ENCODE measurements at regions of chr1 and their contacts with region 1.

Region 1: GRCh38 chr1:210400043-210400840 is 71.5 kb downstream of the HHAT start:
- DNase-seq: peak; percentile 31
- ATAC-seq: peak; percentile 91
- H3K4me3 Mint-ChIP-seq: peak overlapping the region; percentile 5
- H3K27ac Mint-ChIP-seq: peak overlapping the region; percentile 9
- H3K4me1 Mint-ChIP-seq: peaks cover 9% of the 10 kb centered on the region
- H3K27me3 Mint-ChIP-seq: no peaks in the 10 kb centered on the region
- CTCF ChIP-seq: no peak

Region 2: DNA sequence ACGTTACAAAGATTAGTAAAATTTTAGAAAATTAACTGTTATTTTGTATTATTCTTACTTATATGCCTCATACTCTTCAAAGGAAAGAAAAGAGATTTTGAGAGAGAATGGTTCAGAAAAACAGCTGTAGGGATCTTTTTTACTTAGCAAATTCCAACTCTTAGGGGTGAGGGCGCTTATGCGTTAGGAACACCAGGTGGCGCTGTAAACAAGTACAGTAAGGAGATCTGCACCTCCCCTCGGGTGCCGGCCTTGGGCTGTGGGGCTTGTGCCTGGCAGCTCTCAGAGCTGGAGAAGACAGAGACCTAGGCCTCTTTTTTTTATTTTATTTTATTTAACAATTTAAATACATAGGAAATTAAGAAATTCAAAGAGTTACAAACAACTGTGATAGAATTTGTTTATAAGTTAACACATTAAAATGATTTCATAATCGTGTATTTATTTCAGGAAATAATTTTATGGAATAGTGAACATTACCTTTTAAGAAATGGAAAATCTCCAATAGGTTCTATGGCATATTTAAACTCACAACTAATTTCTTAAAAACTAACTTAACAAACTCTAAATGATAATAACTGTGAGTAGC is 539.9 kb before region 1 on chr1:
- CTCF ChIA-PET with region 1: interaction called, 9 read pairs
- POLR2A ChIA-PET with region 1: no interaction called
- intact Hi-C with region 1: loop called (anchors 1 kb)
- DNase-seq: peak; percentile 26
- ATAC-seq: peak; percentile 86
- H3K4me3 Mint-ChIP-seq: no peak overlapping the region
- H3K27ac Mint-ChIP-seq: no peak overlapping the region
- H3K4me1 Mint-ChIP-seq: no peaks in the 10 kb centered on the region
- H3K27me3 Mint-ChIP-seq: peaks cover 5% of the 10 kb centered on the region
- CTCF ChIP-seq: peak; percentile 93

Region 3: GRCh38 chr1:210143465-210144062 is 256.7 kb before region 1 on chr1:
- CTCF ChIA-PET with region 1: interaction called, 28 read pairs
- POLR2A ChIA-PET with region 1: no interaction called
- intact Hi-C with region 1: loop called (anchors 1 kb)
- DNase-seq: peak; percentile 16
- ATAC-seq: no peak
- H3K4me3 Mint-ChIP-seq: no peak overlapping the region
- H3K27ac Mint-ChIP-seq: no peak overlapping the region
- H3K4me1 Mint-ChIP-seq: no peaks in the 10 kb centered on the region
- H3K27me3 Mint-ChIP-seq: peaks cover 18% of the 10 kb centered on the region
- CTCF ChIP-seq: no peak

Region 4: DNA sequence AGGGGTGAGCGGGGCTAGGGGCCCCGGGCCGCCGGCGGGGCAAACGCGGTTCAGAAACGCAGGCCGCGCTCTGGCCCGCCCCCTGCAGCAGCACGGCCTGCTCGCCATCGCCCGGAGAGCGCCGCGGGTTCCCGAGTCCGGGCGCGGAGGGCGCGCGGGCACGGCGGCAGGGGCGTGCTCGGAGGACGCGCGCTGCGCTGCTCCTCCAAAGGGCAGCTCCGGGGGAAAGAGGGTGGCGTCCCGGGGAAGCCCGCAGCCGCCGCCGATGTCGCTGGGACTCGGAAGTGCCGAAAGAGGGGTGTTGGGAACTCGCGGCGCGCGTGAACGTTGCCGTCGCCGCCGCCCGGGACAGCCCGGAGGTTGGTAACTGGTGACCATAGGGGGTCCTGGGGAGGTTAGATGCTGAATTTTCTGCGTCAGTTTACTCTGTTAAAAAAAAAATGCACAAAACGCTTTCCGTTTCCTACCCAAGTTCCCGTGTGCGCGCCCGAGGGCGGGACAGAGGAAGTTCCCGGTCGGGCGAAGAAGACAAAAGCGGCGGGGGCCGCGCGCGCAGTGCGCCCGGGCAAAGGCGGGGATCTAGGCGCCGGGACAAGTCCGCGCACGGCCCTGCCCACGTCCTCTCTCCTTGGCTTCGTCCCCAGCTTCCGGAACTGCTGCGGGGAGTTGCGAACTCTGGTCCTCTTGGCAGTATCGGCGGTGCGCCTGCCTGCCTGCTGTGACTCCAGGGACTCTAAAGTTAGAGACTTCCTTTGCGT is 71.3 kb before region 1 on chr1 and contains the start of gene HHAT:
- CTCF ChIA-PET with region 1: interaction called, 3 read pairs
- POLR2A ChIA-PET with region 1: interaction called, 4 read pairs
- intact Hi-C with region 1: loop called (anchors 1 kb)
- DNase-seq: peak; percentile 73
- ATAC-seq: peak; percentile 80
- H3K4me3 Mint-ChIP-seq: peak within 1 kb of the TSS; percentile 97
- H3K27ac Mint-ChIP-seq: peak within 1 kb of the TSS; percentile 96
- H3K4me1 Mint-ChIP-seq: peaks cover 43% of the 10 kb centered on the region
- H3K27me3 Mint-ChIP-seq: peaks cover 6% of the 10 kb centered on the region
- CTCF ChIP-seq: no peak
- total RNA-seq, gene HHAT: 6.1 and 8.5 TPM in 2 replicates

Region 5: DNA sequence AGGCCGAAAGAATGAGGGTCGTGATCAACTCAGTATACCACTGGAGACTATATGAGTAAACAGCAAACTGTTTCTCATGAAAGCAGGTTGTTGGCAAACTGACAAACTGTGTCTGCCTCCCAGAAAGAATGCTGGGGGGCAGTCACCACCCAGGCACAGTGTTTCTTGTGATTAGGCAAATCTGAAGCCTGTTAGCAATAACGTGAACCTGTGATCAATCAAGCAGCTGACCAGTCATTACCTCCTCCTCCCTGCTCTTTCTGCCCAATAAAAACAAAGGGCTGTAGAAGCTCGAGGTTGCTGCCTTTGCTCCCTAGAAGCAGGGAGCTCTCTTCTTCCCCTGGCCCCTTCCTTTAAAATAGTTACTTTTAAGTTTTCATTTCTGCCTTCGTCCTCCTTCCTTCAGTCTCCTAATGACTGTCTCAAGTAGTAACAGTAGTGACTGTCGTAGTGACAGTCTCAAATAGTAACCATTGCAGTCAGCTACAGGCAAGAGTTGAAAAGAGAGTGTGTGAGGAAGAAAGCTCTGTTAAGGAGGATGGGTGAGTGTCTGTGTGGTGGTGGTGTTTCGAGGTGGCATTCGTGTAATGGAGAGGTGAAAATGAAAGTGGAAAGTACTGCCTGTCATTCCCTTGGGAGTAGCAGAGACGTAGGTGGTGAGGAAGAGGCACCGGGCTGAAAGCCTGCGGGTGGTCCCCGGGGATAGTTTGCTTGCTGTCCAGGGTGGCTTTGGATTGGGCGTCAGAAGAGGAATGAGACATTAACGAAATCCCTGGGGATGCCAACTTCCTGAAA is 57.1 kb before region 1 on chr1:
- CTCF ChIA-PET with region 1: interaction called, 4 read pairs
- POLR2A ChIA-PET with region 1: interaction called, 6 read pairs
- intact Hi-C with region 1: loop called (anchors 1 kb)
- DNase-seq: peak; percentile 62
- ATAC-seq: peak; percentile 90
- H3K4me3 Mint-ChIP-seq: no peak overlapping the region
- H3K27ac Mint-ChIP-seq: no peak overlapping the region
- H3K4me1 Mint-ChIP-seq: peaks cover 34% of the 10 kb centered on the region
- H3K27me3 Mint-ChIP-seq: no peaks in the 10 kb centered on the region
- CTCF ChIP-seq: no peak

Region 6: DNA sequence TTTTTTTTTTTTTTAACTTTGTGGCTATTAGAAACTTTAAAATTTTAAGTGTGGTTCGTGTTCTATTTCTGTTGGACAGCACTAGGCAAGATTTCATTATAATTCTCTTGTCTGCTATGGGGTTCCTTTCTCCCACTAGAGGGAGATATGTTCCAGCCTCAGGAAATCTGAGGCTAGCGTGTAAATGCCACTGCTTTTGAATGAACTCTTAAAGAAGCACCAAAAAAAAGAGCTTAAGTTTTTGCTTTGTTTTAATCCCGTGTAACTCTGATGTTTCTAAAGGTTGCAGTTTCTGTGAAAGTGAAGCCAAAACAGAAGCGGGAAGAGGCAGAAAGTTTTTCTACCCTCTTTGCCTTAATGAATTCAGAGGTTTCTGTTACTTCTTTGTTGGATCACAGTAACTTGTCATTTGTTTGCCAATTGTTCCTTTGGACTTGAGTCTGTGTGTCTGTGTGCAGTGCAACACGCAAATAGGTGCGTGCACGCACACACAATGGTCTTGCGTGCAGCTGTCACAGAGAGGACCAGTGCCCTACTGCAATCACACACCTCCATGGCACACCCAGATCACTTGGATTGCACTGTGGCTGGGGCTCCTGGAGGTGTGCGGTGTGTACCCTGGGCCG is 39.3 kb before region 1 on chr1:
- CTCF ChIA-PET with region 1: interaction called, 10 read pairs
- POLR2A ChIA-PET with region 1: no interaction called
- intact Hi-C with region 1: loop called (anchors 1 kb)
- DNase-seq: no peak
- ATAC-seq: peak; percentile 62
- H3K4me3 Mint-ChIP-seq: no peak overlapping the region
- H3K27ac Mint-ChIP-seq: no peak overlapping the region
- H3K4me1 Mint-ChIP-seq: no peaks in the 10 kb centered on the region
- H3K27me3 Mint-ChIP-seq: no peaks in the 10 kb centered on the region
- CTCF ChIP-seq: no peak

Region 7: DNA sequence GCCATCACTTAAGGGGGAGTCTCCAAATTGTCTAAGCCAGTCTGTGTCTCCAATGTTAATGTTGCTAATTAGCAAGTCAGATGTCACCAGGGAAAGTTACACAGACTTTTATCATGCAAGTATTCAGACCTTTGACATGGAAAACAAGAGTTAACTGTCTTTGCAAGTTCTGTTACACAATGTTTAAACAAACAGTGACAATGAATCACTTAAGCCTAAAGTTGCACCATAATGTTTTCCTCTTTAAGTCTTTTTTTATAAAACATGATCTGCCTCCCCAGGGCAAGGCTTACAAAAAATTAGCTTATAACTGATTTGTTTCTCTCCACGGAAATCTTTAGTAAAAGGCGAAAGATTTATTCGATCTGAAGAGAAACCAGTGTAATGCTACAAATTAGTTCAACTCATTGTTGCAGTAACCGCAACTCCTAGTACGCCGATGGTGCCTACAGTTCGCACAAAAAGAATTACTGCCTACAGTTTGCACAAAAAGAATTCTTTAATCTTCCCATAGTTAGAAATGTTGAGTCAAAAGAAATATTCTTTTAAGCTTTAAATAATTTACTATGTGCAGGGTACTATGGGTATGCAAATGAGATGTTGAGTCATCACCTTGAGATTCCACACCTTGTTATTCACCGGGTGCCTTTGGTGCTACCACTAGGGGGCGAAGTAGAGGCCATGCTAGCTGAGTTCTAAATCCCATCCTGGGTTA is 26.2 kb before region 1 on chr1:
- CTCF ChIA-PET with region 1: interaction called, 8 read pairs
- POLR2A ChIA-PET with region 1: interaction called, 8 read pairs
- intact Hi-C with region 1: loop called (anchors 1 kb)
- DNase-seq: no peak
- ATAC-seq: peak; percentile 70
- H3K4me3 Mint-ChIP-seq: no peak overlapping the region
- H3K27ac Mint-ChIP-seq: peak overlapping the region; percentile 22
- H3K4me1 Mint-ChIP-seq: peaks cover 5% of the 10 kb centered on the region
- H3K27me3 Mint-ChIP-seq: no peaks in the 10 kb centered on the region
- CTCF ChIP-seq: no peak

Region 8: DNA sequence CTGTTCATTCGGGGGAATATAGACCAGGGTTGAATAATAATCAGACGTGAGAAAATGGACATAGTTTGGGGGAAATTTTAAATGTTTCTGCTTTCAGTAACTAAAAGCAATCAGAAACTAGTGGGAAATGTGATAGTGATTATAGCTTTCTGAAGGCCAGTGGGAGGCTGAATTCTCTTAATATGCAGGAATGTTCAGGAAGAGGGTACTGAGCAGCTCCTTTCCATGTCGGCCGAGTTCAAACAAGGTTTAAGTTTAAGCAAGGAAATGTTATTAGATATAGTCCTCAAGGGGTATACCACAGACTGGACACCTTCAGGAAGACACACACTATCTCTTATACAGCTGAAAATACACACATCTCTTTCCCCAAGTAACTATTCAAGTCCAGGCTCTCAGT is 34.0 kb after region 1 on chr1:
- CTCF ChIA-PET with region 1: no interaction called
- POLR2A ChIA-PET with region 1: no interaction called
- intact Hi-C with region 1: no loop called
- DNase-seq: no peak
- ATAC-seq: no peak
- H3K4me3 Mint-ChIP-seq: no peak overlapping the region
- H3K27ac Mint-ChIP-seq: no peak overlapping the region
- H3K4me1 Mint-ChIP-seq: no peaks in the 10 kb centered on the region
- H3K27me3 Mint-ChIP-seq: no peaks in the 10 kb centered on the region
- CTCF ChIP-seq: no peak